Heart left ventricle (tissue), 16 donors: ENCODE measurements at regions of chr7 and their contacts with region 1.

Region 1: GRCh38 chr7:51123322-51124029 is 193.1 kb downstream of the COBL start:
- DNase-seq: peak in 3 of 5 donors; percentile 36 to 56 (median 40)
- ATAC-seq: peak; percentile 40 to 88 (median 64)
- H3K4me3 ChIP-seq: no peak overlapping the region
- H3K27ac ChIP-seq: peak overlapping the region in 8 of 12 donors; percentile 21 to 88 (median 74)
- H3K4me1 ChIP-seq: peaks cover 0 to 37% (median 26%) of the 10 kb centered on the region in 12 donors
- H3K27me3 ChIP-seq: no peaks in the 10 kb centered on the region
- CTCF ChIP-seq: no peak
- POLR2A ChIP-seq: no peak

Region 2: GRCh38 chr7:50962962-50963374 is 160.5 kb before region 1 on chr7:
- intact Hi-C with region 1: loop called in 2 of 10 experiments (anchors 10 kb)
- DNase-seq: peak; percentile 85 to 89 (median 86)
- ATAC-seq: peak; percentile 89 to 98 (median 94)
- H3K4me3 ChIP-seq: no peak overlapping the region
- H3K27ac ChIP-seq: peak overlapping the region in 1 of 12 donors; percentile 1
- H3K4me1 ChIP-seq: peaks cover 3 to 19% (median 9%) of the 10 kb centered on the region in 12 donors
- H3K27me3 ChIP-seq: no peaks in the 10 kb centered on the region
- CTCF ChIP-seq: no peak
- POLR2A ChIP-seq: no peak

Region 3: DNA sequence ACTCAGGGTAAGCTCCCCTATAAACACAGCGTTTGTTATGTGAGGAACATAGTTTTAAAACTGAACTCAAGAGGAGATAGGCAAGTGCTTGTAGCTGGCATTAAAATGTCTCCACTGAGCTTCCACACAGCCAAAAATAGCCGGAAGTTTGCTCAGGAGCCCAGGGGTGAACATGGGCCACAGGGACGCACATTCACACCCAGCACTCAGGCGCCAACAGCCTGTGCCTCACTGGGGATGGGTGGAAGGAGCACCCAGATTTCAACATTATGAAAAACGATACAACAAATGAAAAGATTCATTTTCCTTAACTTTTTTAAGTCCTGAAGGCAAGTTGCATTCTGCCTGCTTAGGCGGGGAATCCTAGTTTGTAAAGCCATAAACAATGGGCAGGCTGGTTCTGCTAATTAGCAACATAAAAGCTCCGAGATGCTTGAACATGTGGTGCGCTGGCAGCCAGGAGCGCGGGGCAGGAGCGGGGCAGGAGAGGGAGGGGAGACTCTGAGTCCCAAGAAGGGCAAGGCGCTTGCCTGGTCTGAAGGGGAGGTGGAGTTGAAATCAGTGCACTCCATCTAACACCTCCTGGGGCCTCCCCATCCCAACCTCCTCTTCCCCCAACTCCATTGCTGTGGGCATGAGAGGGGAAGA is 42.7 kb before region 1 on chr7:
- intact Hi-C with region 1: loop called in 1 of 10 experiments (anchors 5 kb)
- DNase-seq: peak in 1 of 5 donors; percentile 51
- ATAC-seq: peak; percentile 24 to 75 (median 65)
- H3K4me3 ChIP-seq: no peak overlapping the region
- H3K27ac ChIP-seq: peak overlapping the region in 7 of 12 donors; percentile 5 to 59 (median 39)
- H3K4me1 ChIP-seq: peaks cover 0 to 50% (median 12%) of the 10 kb centered on the region in 12 donors
- H3K27me3 ChIP-seq: no peaks in the 10 kb centered on the region
- CTCF ChIP-seq: no peak
- POLR2A ChIP-seq: no peak